HCT116 (cell line): ENCODE measurements at regions of chr9 and their contacts with region 1.

Region 1: DNA sequence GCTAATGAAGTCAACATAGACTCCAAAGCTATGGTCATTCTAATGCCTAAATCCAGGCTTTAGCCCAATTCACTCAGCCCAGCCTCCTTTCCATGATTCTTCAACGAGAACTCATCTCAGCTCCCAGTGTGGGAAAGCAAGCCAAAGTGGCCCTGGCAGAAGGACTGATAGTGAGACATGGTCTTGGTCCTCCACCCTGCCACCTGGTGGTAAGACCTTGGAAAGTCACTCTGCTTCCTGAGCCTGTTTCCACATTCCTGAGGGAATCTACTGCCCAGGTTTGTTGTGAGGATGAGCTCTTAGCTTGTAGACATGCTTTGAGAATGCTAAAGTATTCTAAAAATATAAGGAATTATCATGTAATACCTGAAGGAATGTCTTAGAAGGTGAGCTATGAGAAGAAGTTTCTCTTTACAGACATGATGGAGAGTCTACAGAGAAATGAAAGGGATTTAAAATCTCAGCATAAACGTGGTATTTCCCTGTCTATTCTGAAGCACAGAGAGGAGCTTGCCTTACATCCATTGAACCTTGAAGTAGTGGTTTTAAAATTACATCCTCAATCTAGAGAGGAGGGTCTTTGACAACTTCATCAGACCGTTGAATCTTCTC is 173.5 kb downstream of the TRIM32 start:
- DNase-seq: peak; percentile 51
- ATAC-seq: peak; percentile 95
- H3K4me3 ChIP-seq: no peak overlapping the region
- H3K27ac ChIP-seq: no peak overlapping the region
- H3K4me1 ChIP-seq: peaks cover 0 to 3% of the 10 kb centered on the region in 2 experiments; a peak in 1 of 4 replicates
- H3K27me3 ChIP-seq: peaks cover 13% of the 10 kb centered on the region; the same call in 1 of the 2 replicates
- CTCF ChIP-seq: peak; percentile 45 to 79 (median 72); a peak in 5 of 6 replicates
- POLR2A ChIP-seq: no peak
- RAD21 ChIP-seq: peak; percentile 56

Region 2: GRCh38 chr9:116737152-116737546 is 123.5 kb before region 1 on chr9:
- CTCF ChIA-PET with region 1: interaction called, 70 read pairs
- POLR2A ChIA-PET with region 1: no interaction called
- RAD21 ChIA-PET with region 1: interaction called, 5 to 17 read pairs
- intact Hi-C with region 1: loop called (anchors 1 kb)
- DNase-seq: peak; percentile 64
- ATAC-seq: peak; percentile 97
- H3K4me3 ChIP-seq: no peak overlapping the region
- H3K27ac ChIP-seq: no peak overlapping the region
- H3K4me1 ChIP-seq: no peaks in the 10 kb centered on the region
- H3K27me3 ChIP-seq: peaks cover 21% of the 10 kb centered on the region
- CTCF ChIP-seq: peak; percentile 63 to 95 (median 92); a peak in 5 of 6 replicates
- POLR2A ChIP-seq: no peak
- RAD21 ChIP-seq: peak; percentile 86

Region 3: DNA sequence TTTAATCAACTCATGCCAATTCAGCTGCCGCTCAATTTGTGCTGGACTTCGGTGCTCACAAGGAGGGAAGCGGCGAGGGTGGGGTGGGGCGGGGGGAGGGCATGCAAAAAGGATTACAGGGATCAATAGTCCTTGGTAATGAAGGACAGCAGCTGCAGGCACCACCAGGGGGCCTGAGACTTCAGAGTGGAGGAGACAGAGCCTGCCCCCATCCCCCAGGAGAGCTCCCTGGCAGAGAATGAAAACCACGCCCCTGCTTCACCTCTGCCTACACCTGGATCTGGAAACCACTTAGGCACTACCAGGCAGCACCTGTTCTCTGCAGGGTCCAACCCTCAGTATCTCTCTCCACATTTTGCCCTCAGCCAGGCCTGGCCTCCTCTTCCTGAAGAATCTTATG is 18.0 kb before region 1 on chr9:
- CTCF ChIA-PET with region 1: interaction called, 12 read pairs
- POLR2A ChIA-PET with region 1: no interaction called
- RAD21 ChIA-PET with region 1: no interaction called
- intact Hi-C with region 1: no loop called
- DNase-seq: no peak
- ATAC-seq: peak; percentile 95
- H3K4me3 ChIP-seq: no peak overlapping the region
- H3K27ac ChIP-seq: no peak overlapping the region
- H3K4me1 ChIP-seq: no peaks in the 10 kb centered on the region
- H3K27me3 ChIP-seq: no peaks in the 10 kb centered on the region
- CTCF ChIP-seq: peak in 2 of 3 experiments; percentile 28 to 30; a peak in 3 of 6 replicates
- POLR2A ChIP-seq: no peak
- RAD21 ChIP-seq: 0 out of 2 replicates have a peak, but pooled peaks have one; percentile 5